ENCODE measurements at regions of chr19 and their contacts with region 1.

Region 1: DNA sequence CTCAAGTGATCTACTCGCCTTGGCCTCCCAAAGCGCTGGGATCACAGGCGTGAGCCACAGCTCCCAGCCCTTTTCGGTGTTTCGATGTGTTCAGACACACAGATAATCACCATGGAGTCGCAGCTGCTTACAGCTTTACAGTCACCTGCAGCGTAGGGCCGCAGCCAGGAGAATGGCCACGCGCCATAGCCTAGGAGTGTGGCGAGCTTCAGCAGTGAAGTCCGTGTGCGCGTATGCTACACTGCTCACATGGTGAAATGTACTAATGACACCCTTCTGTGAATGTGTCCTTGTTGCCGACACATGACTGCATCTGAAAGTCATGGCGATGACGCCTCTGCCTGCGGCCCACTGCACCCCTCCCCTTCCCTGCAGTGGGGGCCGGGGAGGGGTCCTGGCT is 23.6 kb downstream of the AP3D1 start:
- DNase-seq: peak; percentile 77 to 81
- ATAC-seq: peak; percentile 82 to 91 (median 87)
- H3K4me3 ChIP-seq: no peak overlapping the region
- H3K27ac ChIP-seq: peak overlapping the region; percentile 47 to 92 (median 84)
- H3K4me1 ChIP-seq: peaks cover 0 to 37% (median 21%) of the 10 kb centered on the region in 9 donors
- H3K27me3 ChIP-seq: no peaks in the 10 kb centered on the region
- CTCF ChIP-seq: no peak

Region 2: GRCh38 chr19:2151339-2152229 is 23.8 kb after region 1 on chr19 and contains the start of gene AP3D1:
- intact Hi-C with region 1: no loop called
- DNase-seq: peak; percentile 99 to 100
- ATAC-seq: peak; percentile 97 to 98 (median 98)
- H3K4me3 ChIP-seq: peak within 1 kb of the TSS; percentile 71 to 100 (median 95)
- H3K27ac ChIP-seq: peak within 1 kb of the TSS; percentile 76 to 95 (median 90)
- H3K4me1 ChIP-seq: peaks cover 8 to 47% (median 39%) of the 10 kb centered on the region in 9 donors
- H3K27me3 ChIP-seq: no peaks in the 10 kb centered on the region
- CTCF ChIP-seq: no peak
- total RNA-seq, gene AP3D1: 68.4 to 168 (median 81.9) TPM

Region 3: DNA sequence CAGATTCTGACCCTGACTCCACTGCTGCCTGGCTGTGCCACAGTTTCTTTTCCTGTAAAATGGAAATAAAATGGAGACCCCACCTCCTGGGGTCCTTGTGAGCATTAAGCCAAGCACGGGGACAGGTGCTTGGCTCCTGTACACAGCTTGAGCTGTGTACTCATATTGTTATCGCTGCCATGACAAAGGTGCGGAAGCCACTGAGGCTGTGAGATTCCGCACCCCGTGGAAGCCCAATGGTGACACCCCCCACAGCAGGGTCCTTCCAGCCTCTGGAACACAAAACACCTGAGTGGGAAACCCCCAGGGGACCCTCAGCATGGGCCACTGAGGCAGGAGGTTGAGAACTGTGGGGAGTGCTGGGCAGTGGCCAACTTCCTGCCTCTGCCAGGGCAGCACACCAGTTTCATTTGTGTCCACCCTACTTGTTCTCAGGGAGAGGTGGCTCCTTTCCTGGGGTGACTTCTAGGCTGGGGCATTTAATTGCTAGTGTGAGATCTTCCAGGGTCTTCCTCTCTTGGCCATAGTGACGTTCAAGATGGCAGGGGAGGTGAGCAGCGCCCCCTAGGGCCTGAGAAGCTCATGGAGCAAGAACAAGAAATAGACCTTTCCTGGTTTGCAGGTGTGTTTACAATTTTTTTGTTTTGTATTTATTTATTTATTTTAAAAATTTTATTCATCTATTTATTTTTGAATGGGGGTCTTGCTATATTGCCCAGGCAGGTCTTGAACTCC is 133.8 kb after region 1 on chr19:
- intact Hi-C with region 1: no loop called
- DNase-seq: no peak
- ATAC-seq: no peak
- H3K4me3 ChIP-seq: no peak overlapping the region
- H3K27ac ChIP-seq: no peak overlapping the region
- H3K4me1 ChIP-seq: peaks cover 0 to 27% (median 4%) of the 10 kb centered on the region in 9 donors
- H3K27me3 ChIP-seq: no peaks in the 10 kb centered on the region
- CTCF ChIP-seq: peak; percentile 8 to 74 (median 57)

Region 4: DNA sequence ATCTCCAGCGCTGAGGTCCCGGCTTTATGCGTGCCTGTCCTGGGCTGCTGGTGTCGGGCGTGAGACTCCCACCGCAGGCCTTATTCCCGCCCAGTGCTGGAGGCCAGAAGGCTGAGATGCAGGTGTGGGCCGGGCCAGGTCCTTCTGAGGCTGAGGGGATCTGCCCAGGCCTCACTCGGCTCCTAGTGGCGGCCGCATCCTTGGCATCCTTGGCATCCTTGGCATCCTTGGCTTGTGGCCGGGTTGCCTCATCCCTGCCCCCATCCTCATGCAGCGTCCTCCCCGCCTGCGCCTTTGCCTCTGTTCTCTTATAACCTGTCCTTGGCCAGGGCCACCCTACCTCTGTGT is 988.5 kb after region 1 on chr19:
- intact Hi-C with region 1: loop called in 1 of 10 experiments (anchors 5 kb)
- DNase-seq: no peak
- ATAC-seq: no peak
- H3K4me3 ChIP-seq: no peak overlapping the region
- H3K27ac ChIP-seq: no peak overlapping the region
- H3K4me1 ChIP-seq: peaks cover 0 to 26% (median 11%) of the 10 kb centered on the region in 9 donors
- H3K27me3 ChIP-seq: no peaks in the 10 kb centered on the region
- CTCF ChIP-seq: no peak